Posterior vena cava (tissue), 2 donors: ENCODE measurements at regions of chr16 and their contacts with region 1.

Region 1: GRCh38 chr16:20952159-20952920 is 51.8 kb downstream of the LYRM1 start:
- DNase-seq: no peak

Region 2: GRCh38 chr16:20928774-20929411 is 23.4 kb before region 1 on chr16:
- intact Hi-C with region 1: no loop called
- DNase-seq: no peak

Region 3: GRCh38 chr16:21028728-21029127 is 76.4 kb after region 1 on chr16:
- intact Hi-C with region 1: loop called in 1 of 2 experiments (anchors 2 kb)
- DNase-seq: no peak